ENCODE measurements at regions of chr2 and their contacts with region 1.

Region 1: GRCh38 chr2:88874063-88874657 is 182.7 kb downstream of the RPIA start:
- DNase-seq: peak in 1 of 2 donors; percentile 47
- ATAC-seq: peak in 6 of 8 donors; percentile 53 to 73 (median 62)
- H3K4me3 ChIP-seq: no peak overlapping the region
- H3K27ac ChIP-seq: no peak overlapping the region
- H3K4me1 ChIP-seq: peaks cover 0 to 3% (median 0%) of the 10 kb centered on the region in 9 donors
- H3K27me3 ChIP-seq: peaks cover 0 to 33% (median 13%) of the 10 kb centered on the region in 7 donors
- CTCF ChIP-seq: peak; percentile 59 to 88 (median 80)

Region 2: GRCh38 chr2:88755836-88756235 is 118.3 kb before region 1 on chr2:
- intact Hi-C with region 1: no loop called
- DNase-seq: no peak
- ATAC-seq: peak in 1 of 8 donors; percentile 55
- H3K4me3 ChIP-seq: no peak overlapping the region
- H3K27ac ChIP-seq: no peak overlapping the region
- H3K4me1 ChIP-seq: peaks cover 0 to 8% (median 0%) of the 10 kb centered on the region in 9 donors
- H3K27me3 ChIP-seq: no peaks in the 10 kb centered on the region
- CTCF ChIP-seq: no peak

Region 3: GRCh38 chr2:88831792-88832248 is 42.3 kb before region 1 on chr2:
- intact Hi-C with region 1: loop called in 1 of 10 experiments (anchors 5 kb)
- DNase-seq: peak; percentile 38 to 51
- ATAC-seq: no peak
- H3K4me3 ChIP-seq: no peak overlapping the region
- H3K27ac ChIP-seq: no peak overlapping the region
- H3K4me1 ChIP-seq: peaks cover 0 to 26% (median 8%) of the 10 kb centered on the region in 9 donors
- H3K27me3 ChIP-seq: no peaks in the 10 kb centered on the region
- CTCF ChIP-seq: peak in 8 of 9 donors; percentile 33 to 81 (median 62)

Region 4: DNA sequence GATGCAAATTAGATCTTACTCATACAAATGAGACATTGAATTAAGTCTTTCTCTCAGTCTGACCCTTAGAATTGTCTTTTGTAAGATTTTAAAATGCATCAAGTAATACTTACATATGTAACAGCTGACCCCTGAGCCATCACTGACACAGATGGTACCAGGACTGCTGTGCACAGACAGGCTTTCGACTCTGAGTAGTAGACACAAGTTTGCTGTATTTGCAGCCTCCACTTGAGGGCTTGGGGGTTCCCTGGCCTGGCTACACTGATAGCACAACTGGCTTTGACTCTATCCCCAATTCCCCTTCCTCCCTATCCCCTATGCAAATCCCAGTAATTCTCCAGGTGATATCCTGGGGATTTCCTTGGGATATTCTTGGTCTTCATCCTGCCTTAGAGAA is 18.0 kb after region 1 on chr2:
- intact Hi-C with region 1: no loop called
- DNase-seq: no peak
- ATAC-seq: no peak
- H3K4me3 ChIP-seq: no peak overlapping the region
- H3K27ac ChIP-seq: no peak overlapping the region
- H3K4me1 ChIP-seq: no peaks in the 10 kb centered on the region
- H3K27me3 ChIP-seq: peaks cover 0 to 41% (median 14%) of the 10 kb centered on the region in 7 donors
- CTCF ChIP-seq: no peak

Measured in heart right ventricle (tissue), 16 donors.